Esophagus squamous epithelium (tissue), 5 donors: ENCODE measurements at regions of chr19 and their contacts with region 1.

Region 1: DNA sequence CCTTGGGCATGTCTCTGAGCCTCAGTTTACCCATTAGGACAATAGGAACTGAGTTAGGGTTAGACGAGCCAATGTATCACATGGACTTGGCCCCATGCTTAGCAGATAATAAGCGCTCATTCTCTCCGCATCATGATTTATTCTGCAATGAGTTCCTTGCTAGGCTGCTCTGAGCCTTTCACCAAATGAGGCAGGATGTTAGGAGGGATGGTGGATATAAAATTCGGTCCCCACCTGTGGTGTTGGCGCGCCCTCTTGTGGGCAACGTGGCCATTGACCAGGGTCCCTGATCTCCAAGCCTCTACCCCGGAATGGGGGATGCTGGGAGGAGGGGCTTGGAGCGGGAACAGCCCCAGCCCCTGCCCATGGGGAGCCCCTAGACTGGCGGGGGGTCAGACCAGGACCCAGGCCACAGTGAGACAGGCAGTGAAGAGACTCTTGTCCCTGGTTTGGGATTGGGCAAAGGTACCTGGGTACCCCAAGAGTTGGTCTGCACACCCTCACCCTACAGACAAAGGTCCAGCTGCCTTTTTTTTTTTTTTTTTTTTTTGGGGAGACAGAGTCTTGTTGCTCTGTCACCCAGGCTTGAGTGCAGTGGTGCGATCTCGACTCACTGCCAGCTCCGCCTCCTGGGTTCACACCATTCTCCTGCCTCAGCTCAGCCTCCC is 43.9 kb downstream of the CERS4 start:
- DNase-seq: peak; percentile 25
- H3K4me3 ChIP-seq: no peak overlapping the region
- H3K27ac ChIP-seq: no peak overlapping the region
- H3K4me1 ChIP-seq: peaks cover 0 to 18% (median 0%) of the 10 kb centered on the region in 3 donors
- H3K27me3 ChIP-seq: no peaks in the 10 kb centered on the region
- CTCF ChIP-seq: peak; percentile 93 to 97 (median 94)
- POLR2A ChIP-seq: no peak

Region 2: DNA sequence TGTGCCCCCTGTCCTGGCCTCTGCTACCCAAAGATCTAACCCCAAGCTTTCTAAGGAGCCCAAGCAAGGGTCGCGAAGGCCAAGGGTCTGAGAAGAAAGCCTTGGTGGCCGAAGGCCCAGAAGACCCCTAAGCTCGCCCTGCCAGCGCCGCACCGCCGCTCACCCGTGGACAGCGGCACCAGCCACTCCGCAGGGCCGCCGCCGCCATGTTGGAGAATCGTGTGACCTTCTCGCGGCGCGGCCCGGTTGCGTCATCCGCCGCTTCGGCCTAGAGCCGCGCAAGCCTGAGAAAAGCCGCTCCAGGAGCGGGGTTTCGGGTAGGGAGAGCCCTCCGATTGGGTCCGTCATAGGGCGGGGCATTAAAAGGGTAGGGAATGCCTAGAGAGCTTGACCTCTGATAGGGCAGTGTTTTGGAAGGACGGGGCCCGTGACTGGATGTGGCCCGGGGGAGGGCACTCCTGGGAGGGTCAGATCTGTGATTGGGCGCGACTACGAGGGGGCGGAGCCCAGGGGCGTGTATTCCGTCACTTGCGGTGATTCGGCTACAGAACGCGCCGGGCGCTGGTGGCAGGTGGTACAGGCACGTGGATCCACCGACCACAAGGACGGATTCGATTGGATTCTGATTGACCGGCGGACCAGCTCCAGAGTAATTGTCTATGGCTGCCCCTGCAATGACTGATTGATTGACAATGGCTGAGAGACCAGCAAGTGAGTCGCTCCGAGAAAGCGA is 309.4 kb before region 1 on chr19 and contains the start of gene TIMM44:
- intact Hi-C with region 1: loop called (anchors 10 kb)
- DNase-seq: peak; percentile 96
- H3K4me3 ChIP-seq: peak within 1 kb of the TSS; percentile 82 to 90 (median 86)
- H3K27ac ChIP-seq: peak within 1 kb of the TSS; percentile 96 to 99 (median 98)
- H3K4me1 ChIP-seq: peaks cover 11 to 41% (median 14%) of the 10 kb centered on the region in 3 donors
- H3K27me3 ChIP-seq: no peaks in the 10 kb centered on the region
- CTCF ChIP-seq: peak in 1 of 6 experiments; percentile 34
- POLR2A ChIP-seq: peak in 3 of 4 donors; percentile 33 to 65 (median 52)
- total RNA-seq, gene TIMM44: 36.4 to 52.6 (median 45.5) TPM

Region 3: GRCh38 chr19:8158411-8159074 is 94.5 kb before region 1 on chr19:
- intact Hi-C with region 1: loop called (anchors 5 kb)
- DNase-seq: no peak
- H3K4me3 ChIP-seq: no peak overlapping the region
- H3K27ac ChIP-seq: no peak overlapping the region
- H3K4me1 ChIP-seq: peaks cover 8 to 9% (median 8%) of the 10 kb centered on the region in 3 donors
- H3K27me3 ChIP-seq: peaks cover 0 to 7% (median 0%) of the 10 kb centered on the region in 4 donors
- CTCF ChIP-seq: peak; percentile 48 to 82 (median 64)
- POLR2A ChIP-seq: no peak

Region 4: DNA sequence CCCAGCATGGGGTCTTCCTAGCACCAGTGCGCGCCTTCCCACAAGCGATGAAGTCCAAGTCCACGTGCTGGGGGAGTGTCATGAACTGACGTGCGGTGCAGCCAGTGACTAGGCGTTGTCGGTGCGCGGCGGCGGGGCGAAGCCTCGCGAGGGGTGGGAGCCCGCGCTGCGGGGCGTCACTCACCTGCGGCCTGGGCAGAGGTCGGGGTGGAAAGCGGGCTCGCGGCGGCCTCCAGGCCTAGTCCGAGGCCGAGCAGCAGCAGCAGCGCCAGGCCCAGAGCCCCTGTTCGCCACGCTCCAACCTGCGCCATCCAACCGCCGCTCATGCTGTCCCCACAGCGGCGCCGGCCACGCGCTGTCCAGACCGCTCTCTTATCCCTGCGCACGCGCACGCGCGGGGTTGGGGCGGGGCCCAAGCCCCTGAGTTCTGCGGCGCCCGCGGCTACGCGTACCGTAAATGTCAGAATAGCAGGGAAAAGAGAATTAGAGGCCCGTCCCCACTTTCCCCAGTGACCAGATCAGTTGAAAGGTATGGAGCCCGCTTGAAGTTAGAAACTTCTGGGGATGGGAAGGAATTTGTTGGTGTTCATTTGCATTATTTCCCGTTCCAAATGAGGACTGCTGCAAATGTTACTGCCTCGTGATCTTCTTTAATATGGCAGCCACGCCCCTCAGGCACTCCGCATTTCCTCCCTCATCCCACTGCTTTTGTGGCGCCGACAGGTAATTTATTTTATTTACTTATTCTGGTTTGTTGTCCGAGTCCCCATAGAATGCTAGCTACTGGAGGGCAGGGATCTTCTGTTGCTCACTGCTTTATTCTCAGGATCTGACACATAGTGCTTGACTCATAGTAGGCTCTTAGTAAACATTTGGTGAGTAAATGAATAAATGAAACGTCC is 55.2 kb after region 1 on chr19 and contains the start of gene CD320:
- intact Hi-C with region 1: no loop called
- DNase-seq: no peak
- H3K4me3 ChIP-seq: peak within 1 kb of the TSS; percentile 48 to 80 (median 54)
- H3K27ac ChIP-seq: peak within 1 kb of the TSS; percentile 46 to 83 (median 79)
- H3K4me1 ChIP-seq: peaks cover 22 to 54% (median 26%) of the 10 kb centered on the region in 3 donors
- H3K27me3 ChIP-seq: no peaks in the 10 kb centered on the region
- CTCF ChIP-seq: no peak
- POLR2A ChIP-seq: peak in 2 of 4 donors; percentile 29 to 33
- total RNA-seq, gene CD320: 8.7 to 27.0 (median 22.3) TPM